ENCODE measurements at regions of chrX and their contacts with region 1.

Region 1: DNA sequence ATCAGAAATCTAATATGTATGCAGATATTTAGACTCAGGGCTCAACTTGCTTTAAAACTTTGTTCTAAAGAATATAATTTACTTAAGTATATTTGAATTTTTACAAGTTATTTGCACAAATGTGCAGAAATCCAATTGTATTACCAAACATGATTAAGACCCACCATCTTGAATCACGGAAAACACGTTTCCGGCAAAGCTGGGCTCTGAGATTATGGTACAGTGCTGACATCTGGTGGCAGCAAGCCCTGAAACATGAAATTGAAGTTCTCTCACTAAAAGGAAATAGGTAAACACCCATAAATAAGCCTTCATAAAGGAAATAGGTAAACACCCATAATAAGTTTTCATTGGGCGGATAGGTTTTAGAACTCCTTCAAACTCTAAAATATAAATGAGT is 98.3 kb upstream of the MAOA start:
- DNase-seq: peak; percentile 61 to 79 (median 68)
- ATAC-seq: peak; percentile 70
- H3K4me3 ChIP-seq: no peak overlapping the region
- H3K27ac ChIP-seq: no peak overlapping the region
- H3K4me1 ChIP-seq: peaks cover 10% of the 10 kb centered on the region
- H3K27me3 ChIP-seq: no peaks in the 10 kb centered on the region
- CTCF ChIP-seq: peak in 6 of 7 experiments; percentile 32 to 78 (median 62)
- POLR2A ChIP-seq: no peak

Region 2: DNA sequence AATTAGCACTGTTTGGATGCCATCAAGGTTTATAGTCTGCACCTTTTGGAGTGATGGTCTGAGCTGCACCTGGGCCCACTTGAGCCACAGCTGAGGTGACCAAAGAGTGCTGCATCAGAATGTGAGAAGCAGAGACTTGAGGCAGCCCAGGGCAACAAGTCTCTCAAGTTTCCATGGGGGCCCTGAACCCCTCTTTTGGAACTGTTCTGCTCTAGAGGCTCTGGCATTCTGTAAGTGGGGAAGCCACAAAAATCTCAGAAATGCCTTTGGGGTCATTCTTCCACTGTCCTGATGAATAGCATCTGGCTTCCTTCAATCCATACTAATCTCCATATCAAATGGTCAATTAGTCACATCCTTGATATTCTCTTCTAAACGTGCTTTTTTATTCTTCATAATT is 200.1 kb before region 1 on chrX:
- intact Hi-C with region 1: loop called (anchors 10 kb)
- DNase-seq: no peak
- ATAC-seq: no peak
- H3K4me3 ChIP-seq: no peak overlapping the region
- H3K27ac ChIP-seq: no peak overlapping the region
- H3K4me1 ChIP-seq: no peaks in the 10 kb centered on the region
- H3K27me3 ChIP-seq: no peaks in the 10 kb centered on the region
- CTCF ChIP-seq: no peak
- POLR2A ChIP-seq: no peak

Region 3: GRCh38 chrX:43750248-43750676 is 192.5 kb after region 1 on chrX:
- intact Hi-C with region 1: loop called (anchors 5 kb)
- DNase-seq: peak; percentile 47 to 70 (median 60)
- ATAC-seq: peak; percentile 82
- H3K4me3 ChIP-seq: no peak overlapping the region
- H3K27ac ChIP-seq: no peak overlapping the region
- H3K4me1 ChIP-seq: peaks cover 25% of the 10 kb centered on the region
- H3K27me3 ChIP-seq: no peaks in the 10 kb centered on the region
- CTCF ChIP-seq: peak; percentile 14 to 79 (median 64)
- POLR2A ChIP-seq: no peak

Measured in body of pancreas (tissue), 4 donors.